Gastrocnemius medialis (tissue), 4 donors: ENCODE measurements at regions of chrX and their contacts with region 1.

Region 1: DNA sequence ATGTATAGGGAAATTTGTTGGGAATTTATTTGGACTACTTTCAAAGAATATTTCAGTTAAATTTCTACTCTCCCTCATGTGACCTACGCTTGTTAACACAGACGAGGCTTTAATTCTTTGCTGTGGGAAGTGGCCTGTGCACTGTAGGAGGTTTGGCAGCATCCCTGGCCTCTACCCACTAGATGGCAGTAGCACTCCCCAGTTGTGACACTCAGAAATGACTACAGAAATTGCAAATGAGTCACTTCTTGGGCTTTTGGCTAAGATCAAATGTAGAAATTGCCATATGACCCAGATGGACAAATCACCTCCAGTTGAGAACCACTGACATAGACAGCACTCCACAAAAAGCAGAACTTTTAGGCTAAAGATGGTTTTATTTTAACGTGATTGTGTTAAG is 22.1 kb downstream of the PIR start:
- DNase-seq: peak; percentile 45 to 51
- ATAC-seq: peak; percentile 70 to 94
- H3K4me3 ChIP-seq: no peak overlapping the region
- H3K27ac ChIP-seq: peak overlapping the region; percentile 34 to 70 (median 44)
- H3K4me1 ChIP-seq: peaks cover 12 to 14% of the 10 kb centered on the region in 2 donors
- H3K27me3 ChIP-seq: peaks cover 0 to 2% (median 0%) of the 10 kb centered on the region in 3 donors
- CTCF ChIP-seq: peak; percentile 34 to 74 (median 68)
- POLR2A ChIP-seq: no peak

Region 2: DNA sequence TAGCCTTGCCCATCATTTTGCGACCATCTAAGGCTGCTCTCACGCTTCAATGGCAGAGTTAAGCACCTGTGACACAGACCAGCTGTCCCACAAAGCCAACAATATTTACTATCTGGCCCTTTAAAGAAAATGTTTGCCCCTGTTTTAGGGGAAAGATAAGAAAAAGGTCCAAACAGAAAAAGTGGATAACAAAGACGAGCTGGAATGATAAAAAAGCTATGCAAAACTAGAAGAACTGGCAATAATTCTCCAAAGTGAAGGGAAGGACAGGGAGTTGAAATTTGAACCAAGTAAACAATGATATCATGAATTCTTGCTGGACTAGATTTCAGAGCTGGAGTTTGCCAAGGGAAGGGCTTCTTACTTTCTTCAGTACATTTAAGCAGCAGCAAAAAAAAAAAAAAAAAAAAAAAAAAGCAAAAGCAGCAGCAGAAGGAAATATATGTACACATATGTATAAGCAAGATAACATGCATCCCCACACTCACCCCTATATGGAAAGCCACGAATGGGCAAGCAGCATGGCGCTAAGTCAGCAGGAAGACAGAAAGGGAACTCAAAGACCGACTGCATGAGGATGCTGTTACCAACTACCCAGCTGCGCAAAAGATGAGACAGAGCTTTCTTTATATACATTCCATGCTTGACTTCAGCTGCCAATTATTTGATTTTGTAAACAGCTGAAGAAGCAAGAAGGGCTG is 1749.0 kb before region 1 on chrX:
- in situ Hi-C with region 1: no loop called
- intact Hi-C with region 1: loop called (anchors 10 kb)
- DNase-seq: no peak
- ATAC-seq: peak; percentile 69 to 85
- H3K4me3 ChIP-seq: no peak overlapping the region
- H3K27ac ChIP-seq: peak overlapping the region; percentile 64 to 74 (median 72)
- H3K4me1 ChIP-seq: peaks cover 9 to 13% of the 10 kb centered on the region in 2 donors
- H3K27me3 ChIP-seq: no peaks in the 10 kb centered on the region
- CTCF ChIP-seq: no peak
- POLR2A ChIP-seq: no peak

Region 3: GRCh38 chrX:15299941-15300851 is 170.8 kb before region 1 on chrX:
- in situ Hi-C with region 1: no loop called
- intact Hi-C with region 1: loop called (anchors 5 kb)
- DNase-seq: no peak
- ATAC-seq: no peak
- H3K4me3 ChIP-seq: no peak overlapping the region
- H3K27ac ChIP-seq: peak overlapping the region; percentile 83 to 92 (median 91)
- H3K4me1 ChIP-seq: peaks cover 22 to 23% of the 10 kb centered on the region in 2 donors
- H3K27me3 ChIP-seq: no peaks in the 10 kb centered on the region
- CTCF ChIP-seq: peak; percentile 21 to 58 (median 42)
- POLR2A ChIP-seq: no peak

Region 4: GRCh38 chrX:15349046-15349445 is 122.0 kb before region 1 on chrX:
- in situ Hi-C with region 1: loop called in 3 of 4 experiments (anchors 5 to 25 kb)
- intact Hi-C with region 1: loop called (anchors 1 kb)
- DNase-seq: peak in 1 of 2 donors; percentile 44
- ATAC-seq: peak; percentile 75 to 84
- H3K4me3 ChIP-seq: no peak overlapping the region
- H3K27ac ChIP-seq: no peak overlapping the region
- H3K4me1 ChIP-seq: no peaks in the 10 kb centered on the region
- H3K27me3 ChIP-seq: no peaks in the 10 kb centered on the region
- CTCF ChIP-seq: peak; percentile 6 to 57 (median 42)
- POLR2A ChIP-seq: no peak

Region 5: DNA sequence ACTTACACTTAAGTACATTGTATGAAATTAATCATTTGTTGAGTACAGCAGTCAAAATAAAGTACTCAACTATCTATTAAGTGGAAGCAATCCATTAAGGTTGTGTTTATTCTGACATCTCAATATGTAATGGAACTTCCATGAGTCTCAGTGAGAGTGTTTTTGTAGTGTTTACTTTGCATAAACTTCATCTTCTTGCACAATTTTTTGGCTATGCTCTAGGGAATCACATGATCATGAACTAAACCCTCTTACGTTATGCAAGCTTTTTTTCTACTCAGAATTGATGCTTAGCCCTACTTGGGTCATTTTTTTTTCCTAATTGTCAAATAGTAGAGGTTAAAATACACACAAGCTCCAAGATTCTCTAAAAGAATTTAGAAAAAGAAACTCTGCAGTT is 114.6 kb before region 1 on chrX:
- in situ Hi-C with region 1: loop called in 1 of 4 experiments (anchors 10 kb)
- intact Hi-C with region 1: no loop called
- DNase-seq: no peak
- ATAC-seq: peak; percentile 63 to 65
- H3K4me3 ChIP-seq: no peak overlapping the region
- H3K27ac ChIP-seq: peak overlapping the region; percentile 3 to 48 (median 34)
- H3K4me1 ChIP-seq: no peaks in the 10 kb centered on the region
- H3K27me3 ChIP-seq: no peaks in the 10 kb centered on the region
- CTCF ChIP-seq: no peak
- POLR2A ChIP-seq: no peak

Region 6: DNA sequence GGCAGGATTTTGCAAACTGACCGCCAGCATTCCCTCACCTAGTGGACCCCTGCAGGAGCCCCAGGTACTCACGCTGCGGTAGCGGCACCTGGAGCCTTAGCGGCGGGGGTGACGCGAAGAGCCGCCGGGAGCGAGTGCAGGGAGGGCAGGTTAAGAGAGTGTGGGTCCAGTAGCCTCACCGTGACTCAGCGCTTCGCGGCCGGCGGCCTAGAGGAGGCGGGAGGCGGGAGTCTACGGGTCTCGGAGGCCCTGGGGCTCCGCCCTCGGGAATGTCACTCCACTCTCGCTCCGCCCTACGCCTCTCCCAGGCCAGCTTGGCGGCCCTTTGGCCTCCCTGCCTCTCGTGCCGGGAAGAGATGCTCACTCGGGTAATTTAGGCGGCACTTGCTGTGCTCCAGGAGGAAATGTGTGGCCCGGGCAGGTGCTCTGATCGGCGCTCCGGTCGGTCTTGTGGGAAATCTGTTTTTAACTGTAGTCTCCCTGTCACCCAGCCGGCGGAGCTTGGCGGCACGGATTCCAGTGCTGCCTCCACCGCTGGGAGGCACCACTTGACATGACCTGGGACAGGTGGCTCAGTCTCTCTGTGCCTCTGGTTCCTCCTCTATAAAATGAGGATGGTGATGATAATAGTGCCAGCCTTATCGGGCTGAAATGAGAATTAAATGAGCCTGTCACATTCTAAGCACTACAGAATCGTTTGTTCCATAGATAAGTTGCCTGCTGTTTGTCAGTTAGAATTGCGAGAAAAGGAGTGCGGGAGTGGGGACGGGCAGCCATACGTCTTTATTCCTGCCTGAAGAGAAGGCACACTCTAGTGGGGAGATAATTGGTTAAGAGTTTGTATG is 22.3 kb after region 1 on chrX and contains the start of gene PIR:
- in situ Hi-C with region 1: no loop called
- intact Hi-C with region 1: loop called (anchors 2 kb)
- DNase-seq: peak; percentile 74 to 87
- ATAC-seq: peak; percentile 94
- H3K4me3 ChIP-seq: peak within 1 kb of the TSS; percentile 62 to 73 (median 66)
- H3K27ac ChIP-seq: peak within 1 kb of the TSS; percentile 83 to 93 (median 86)
- H3K4me1 ChIP-seq: no peaks in the 10 kb centered on the region
- H3K27me3 ChIP-seq: no peaks in the 10 kb centered on the region
- CTCF ChIP-seq: peak in 2 of 5 experiments; percentile 45 to 48
- POLR2A ChIP-seq: peak; percentile 69 to 72
- total RNA-seq, gene PIR: 9.4 to 20.2 (median 14.2) TPM

Region 7: GRCh38 chrX:15564981-15565579 is 94.1 kb after region 1 on chrX:
- in situ Hi-C with region 1: loop called in 2 of 4 experiments (anchors 5 to 10 kb)
- intact Hi-C with region 1: loop called (anchors 1 kb)
- DNase-seq: peak; percentile 24 to 59
- ATAC-seq: peak; percentile 85 to 96
- H3K4me3 ChIP-seq: no peak overlapping the region
- H3K27ac ChIP-seq: no peak overlapping the region
- H3K4me1 ChIP-seq: no peaks in the 10 kb centered on the region
- H3K27me3 ChIP-seq: peaks cover 0 to 4% (median 0%) of the 10 kb centered on the region in 3 donors
- CTCF ChIP-seq: peak in 4 of 5 experiments; percentile 26 to 61 (median 46)
- POLR2A ChIP-seq: no peak